ENCODE measurements at regions of chr15 and their contacts with region 1.

Region 1: GRCh38 chr15:90320061-90320884 is 31.8 kb upstream of the ZNF774 start:
- DNase-seq: peak; percentile 71
- H3K4me3 ChIP-seq: peak overlapping the region; percentile 10; the same call in 1 of the 2 replicates
- H3K27ac ChIP-seq: no peak overlapping the region
- H3K27me3 ChIP-seq: no peaks in the 10 kb centered on the region
- CTCF ChIP-seq: peak; percentile 100

Region 2: GRCh38 chr15:90291679-90292356 is 28.5 kb before region 1 on chr15:
- CTCF ChIA-PET with region 1: interaction called, 10 read pairs
- POLR2A ChIA-PET with region 1: no interaction called
- DNase-seq: no peak
- H3K4me3 ChIP-seq: no peak overlapping the region
- H3K27ac ChIP-seq: no peak overlapping the region
- H3K27me3 ChIP-seq: peaks cover 2% of the 10 kb centered on the region
- CTCF ChIP-seq: no peak

Region 3: DNA sequence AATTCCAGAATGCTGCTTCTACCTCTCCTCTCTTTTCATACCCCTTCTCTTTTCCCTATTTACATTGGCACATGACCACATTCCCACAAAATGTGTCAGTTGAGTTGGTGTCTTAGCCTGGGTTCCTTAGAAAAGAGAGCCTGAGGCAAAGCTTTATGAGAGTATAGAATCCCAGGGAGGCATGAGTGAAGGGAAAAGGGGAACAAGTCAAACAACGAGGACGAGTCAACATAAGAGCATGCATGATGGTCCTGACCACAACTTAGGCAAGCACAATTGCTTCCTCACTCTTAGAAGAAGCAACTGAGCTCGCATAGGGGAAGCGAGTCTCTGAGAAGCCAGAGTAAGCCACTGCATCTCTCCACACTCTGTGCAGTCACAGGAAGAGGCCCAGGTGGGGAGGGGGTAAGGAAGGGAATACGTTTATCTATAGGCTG is 16.4 kb after region 1 on chr15:
- CTCF ChIA-PET with region 1: interaction called, 13 read pairs
- POLR2A ChIA-PET with region 1: no interaction called
- DNase-seq: no peak
- H3K4me3 ChIP-seq: no peak overlapping the region
- H3K27ac ChIP-seq: no peak overlapping the region
- H3K27me3 ChIP-seq: no peaks in the 10 kb centered on the region
- CTCF ChIP-seq: no peak

Region 4: GRCh38 chr15:90451053-90451850 is 131.0 kb after region 1 on chr15:
- CTCF ChIA-PET with region 1: interaction called, 34 read pairs
- POLR2A ChIA-PET with region 1: no interaction called
- DNase-seq: no peak
- H3K4me3 ChIP-seq: no peak overlapping the region
- H3K27ac ChIP-seq: peak overlapping the region; percentile 52
- H3K27me3 ChIP-seq: no peaks in the 10 kb centered on the region
- CTCF ChIP-seq: no peak

Region 5: DNA sequence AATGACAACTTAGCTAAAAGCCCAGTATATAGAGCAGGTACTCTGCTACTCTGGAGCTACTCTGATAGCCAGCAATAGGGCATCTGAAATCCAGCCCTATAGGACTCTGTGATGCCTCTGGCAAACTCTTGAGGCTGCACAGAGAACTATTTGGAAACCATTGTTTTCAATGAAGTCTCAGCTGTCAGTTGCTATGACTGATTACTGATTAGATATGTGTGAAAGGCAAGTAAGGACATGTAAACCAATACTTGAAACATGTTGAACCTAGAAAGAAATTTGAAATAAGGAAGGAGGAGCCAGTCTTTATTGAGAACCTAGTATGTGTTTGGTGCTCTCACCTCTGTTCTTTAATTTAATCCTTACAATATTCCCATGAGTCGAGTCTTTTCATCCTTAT is 169.2 kb after region 1 on chr15:
- CTCF ChIA-PET with region 1: interaction called, 237 read pairs
- POLR2A ChIA-PET with region 1: interaction called, 3 read pairs
- DNase-seq: no peak
- H3K4me3 ChIP-seq: no peak overlapping the region
- H3K27ac ChIP-seq: no peak overlapping the region
- H3K27me3 ChIP-seq: no peaks in the 10 kb centered on the region
- CTCF ChIP-seq: no peak

Region 6: DNA sequence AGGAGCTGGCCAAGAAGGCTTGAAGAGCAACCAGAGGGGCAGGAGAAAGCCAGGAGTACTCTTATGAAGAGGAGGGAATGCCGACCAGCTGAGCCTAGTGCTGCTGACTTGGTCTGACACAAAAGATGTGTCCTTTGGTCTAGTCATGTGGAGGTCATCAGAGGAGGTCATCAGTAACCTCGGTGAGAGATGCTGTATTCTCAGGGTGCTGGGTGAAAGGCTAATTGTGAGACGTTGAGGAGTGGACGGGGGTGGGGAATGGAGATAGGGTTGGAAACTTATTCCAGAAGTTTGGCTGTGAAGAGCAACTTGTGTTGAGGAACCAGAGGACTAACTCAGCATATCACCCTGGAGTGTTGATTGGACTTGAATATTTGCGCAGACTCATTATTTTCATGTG is 215.0 kb after region 1 on chr15:
- CTCF ChIA-PET with region 1: interaction called, 14 read pairs
- POLR2A ChIA-PET with region 1: no interaction called
- DNase-seq: no peak
- H3K4me3 ChIP-seq: no peak overlapping the region
- H3K27ac ChIP-seq: no peak overlapping the region
- H3K27me3 ChIP-seq: no peaks in the 10 kb centered on the region
- CTCF ChIP-seq: no peak